Dendritic cell treated with granulocyte-macrophage colony-stimulating factor and Interleukin-4, amounts not matched to agents 40 ng/mL and 50 ng/mL, for 4 days (primary cell): ENCODE measurements at regions of chr16 and their contacts with region 1.

Region 1: DNA sequence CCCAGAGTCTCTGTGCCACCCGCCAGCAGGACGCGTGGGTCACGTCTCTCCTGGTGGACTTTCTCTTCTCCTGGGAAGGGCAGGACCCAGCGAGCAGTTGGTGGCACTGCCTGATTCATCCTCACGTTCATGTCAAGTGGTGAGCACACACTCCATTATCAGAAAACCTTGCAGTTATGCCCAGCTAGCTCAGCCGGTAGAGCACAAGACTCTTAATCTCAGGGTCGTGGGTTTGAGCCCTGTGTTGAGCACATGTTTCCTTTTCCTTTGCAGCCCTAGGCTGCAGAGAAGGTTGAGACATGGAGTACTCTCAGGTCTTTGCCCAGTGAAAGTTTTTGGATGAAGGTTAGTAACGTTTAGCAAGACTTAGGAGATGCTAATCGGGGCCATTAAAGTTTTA is 8.0 kb downstream of the OR1F1 start:
- H3K4me3 Mint-ChIP-seq: no peak overlapping the region
- H3K27ac Mint-ChIP-seq: no peak overlapping the region
- H3K4me1 Mint-ChIP-seq: no peaks in the 10 kb centered on the region
- H3K27me3 Mint-ChIP-seq: peaks cover 82% of the 10 kb centered on the region

Region 2: DNA sequence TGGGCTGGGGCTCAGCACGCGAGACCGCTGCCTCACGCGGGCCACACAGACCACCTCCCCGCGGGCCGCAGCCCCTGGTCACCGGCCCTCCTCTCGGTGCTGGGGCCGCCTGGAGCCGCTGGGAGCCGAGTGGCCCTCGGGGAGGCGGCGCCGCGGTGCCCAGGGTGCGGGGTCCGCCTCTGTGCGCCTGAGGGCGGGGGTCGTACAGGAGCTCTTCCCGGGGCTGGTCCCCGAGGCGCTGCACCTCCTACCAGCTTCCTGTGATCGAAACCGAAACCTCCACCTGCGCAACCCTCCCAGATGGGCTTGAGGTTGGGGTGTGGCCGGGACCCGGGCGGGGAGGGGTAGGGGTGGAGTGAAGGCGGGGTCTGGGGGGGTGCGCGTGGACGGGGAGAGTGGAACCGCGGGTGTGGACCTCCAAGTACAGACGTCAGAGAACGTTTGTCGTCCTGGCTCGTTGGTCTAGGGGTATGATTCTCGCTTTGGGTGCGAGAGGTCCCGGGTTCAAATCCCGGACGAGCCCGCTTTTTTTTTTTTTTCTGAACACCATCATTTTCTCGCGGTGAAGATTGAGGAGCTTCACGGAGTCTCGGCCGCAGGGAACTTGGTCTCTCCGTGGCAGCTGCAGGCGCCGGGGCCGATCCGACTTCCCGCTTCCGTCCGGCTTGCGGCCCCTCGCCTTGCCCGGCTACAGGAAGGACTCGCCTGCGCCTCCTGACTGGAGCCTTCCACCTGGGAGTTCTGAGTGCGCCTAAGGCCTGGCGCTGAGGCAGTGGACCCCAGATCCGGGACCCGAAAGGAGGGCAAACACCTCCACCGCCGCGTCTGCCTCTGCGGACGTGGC is 37.3 kb before region 1 on chr16:
- intact Hi-C with region 1: loop called (anchors 2 kb)
- H3K4me3 Mint-ChIP-seq: peak overlapping the region; percentile 86
- H3K27ac Mint-ChIP-seq: peak overlapping the region; percentile 88
- H3K4me1 Mint-ChIP-seq: peaks cover 40% of the 10 kb centered on the region
- H3K27me3 Mint-ChIP-seq: peaks cover 86% of the 10 kb centered on the region